Activated T-helper 2 cell treated with anti-CD3 and anti-CD28 coated beads, Interferon-gamma antibody, Interleukin-2, Interleukin-4, amounts not matched to agents 10 μg/mL and 5 μg/mL and 100 μg/mL, durations not matched to agents 14 hours and 24 hours and 36 hours (primary cell): ENCODE measurements at regions of chrX and their contacts with region 1.

Region 1: DNA sequence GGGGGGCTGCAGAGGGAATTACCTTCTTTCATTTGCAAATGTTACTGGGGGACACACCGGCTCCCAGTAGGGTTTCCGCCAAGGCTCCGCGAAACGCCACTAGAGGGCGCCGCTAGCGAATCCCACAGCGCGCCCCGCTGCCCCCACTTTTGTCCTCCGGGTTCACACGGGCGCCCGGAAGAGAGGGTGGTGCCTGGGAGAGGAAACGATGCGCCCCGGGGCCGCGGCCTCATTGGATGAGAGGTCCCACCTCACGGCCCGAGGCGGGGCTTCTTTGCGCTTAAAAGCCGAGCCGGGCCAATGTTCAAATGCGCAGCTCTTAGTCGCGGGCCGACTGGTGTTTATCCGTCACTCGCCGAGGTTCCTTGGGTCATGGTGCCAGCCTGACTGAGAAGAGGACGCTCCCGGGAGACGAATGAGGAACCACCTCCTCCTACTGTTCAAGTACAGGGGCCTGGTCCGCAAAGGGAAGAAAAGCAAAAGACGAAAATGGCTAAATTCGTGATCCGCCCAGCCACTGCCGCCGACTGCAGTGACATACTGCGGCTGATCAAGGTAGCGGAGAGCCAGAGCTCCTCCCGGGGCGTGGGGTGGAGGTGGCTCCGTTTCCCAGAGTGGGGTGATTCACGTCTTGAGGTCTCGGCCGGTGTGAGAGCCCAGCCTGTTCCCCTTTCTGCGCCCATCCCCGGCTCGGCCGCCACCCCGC is at the start of gene SAT1:
- DNase-seq: peak; percentile 90
- H3K4me3 Mint-ChIP-seq: peak within 1 kb of the TSS; percentile 90
- H3K27ac Mint-ChIP-seq: peak within 1 kb of the TSS; percentile 96
- H3K4me1 Mint-ChIP-seq: peaks cover 31% of the 10 kb centered on the region
- H3K27me3 Mint-ChIP-seq: no peaks in the 10 kb centered on the region
- total RNA-seq, gene SAT1: 76.7 and 78.8 TPM in 2 replicates

Region 2: DNA sequence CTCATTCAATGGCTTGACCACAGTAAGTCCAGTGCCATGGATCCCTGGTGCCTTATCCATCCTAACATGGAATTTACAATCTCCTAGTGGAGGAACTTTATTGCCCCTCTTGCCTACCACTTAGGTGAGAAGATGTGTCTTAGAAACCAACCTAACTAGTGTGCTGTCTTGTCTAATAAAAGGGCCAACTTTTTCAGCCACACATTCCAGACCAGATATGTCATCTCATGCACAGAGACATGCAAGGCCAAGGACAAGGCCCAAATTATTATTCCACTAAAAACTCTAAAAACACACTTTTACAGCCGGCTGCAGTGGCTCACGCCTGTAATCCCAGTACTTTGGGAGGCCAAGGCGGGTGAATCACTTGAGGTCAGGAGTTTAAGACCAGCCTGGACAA is 126.3 kb before region 1 on chrX:
- intact Hi-C with region 1: no loop called
- DNase-seq: no peak
- H3K4me3 Mint-ChIP-seq: no peak overlapping the region
- H3K27ac Mint-ChIP-seq: no peak overlapping the region
- H3K4me1 Mint-ChIP-seq: peaks cover 7% of the 10 kb centered on the region
- H3K27me3 Mint-ChIP-seq: peaks cover 2% of the 10 kb centered on the region

Region 3: DNA sequence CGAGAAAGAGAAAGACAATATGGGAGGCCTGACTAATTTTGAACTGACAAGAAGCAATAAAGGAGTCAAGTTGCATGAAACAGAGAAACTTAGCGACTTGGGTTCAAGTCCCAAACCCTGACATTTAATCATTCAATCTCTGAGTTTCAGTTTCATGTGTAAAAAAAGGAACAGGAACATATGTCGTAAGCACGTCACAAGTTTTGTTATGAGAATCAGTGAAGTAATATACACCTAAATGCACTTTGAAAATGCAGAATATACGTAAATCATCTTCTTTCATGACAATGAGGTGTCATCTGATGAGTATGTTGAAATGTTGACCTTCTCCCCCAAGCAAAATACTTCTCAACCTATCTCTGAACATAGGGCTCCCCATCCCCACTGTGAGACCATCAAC is 50.3 kb before region 1 on chrX:
- intact Hi-C with region 1: loop called (anchors 1 kb)
- DNase-seq: no peak
- H3K4me3 Mint-ChIP-seq: peak overlapping the region; percentile 57
- H3K27ac Mint-ChIP-seq: peak overlapping the region; percentile 79
- H3K4me1 Mint-ChIP-seq: peaks cover 27% of the 10 kb centered on the region
- H3K27me3 Mint-ChIP-seq: no peaks in the 10 kb centered on the region

Region 4: GRCh38 chrX:23742697-23743622 is 40.1 kb before region 1 on chrX and contains the start of gene ACOT9:
- intact Hi-C with region 1: loop called (anchors 2 kb)
- DNase-seq: peak; percentile 75
- H3K4me3 Mint-ChIP-seq: peak within 1 kb of the TSS; percentile 94
- H3K27ac Mint-ChIP-seq: peak within 1 kb of the TSS; percentile 90
- H3K4me1 Mint-ChIP-seq: peaks cover 19% of the 10 kb centered on the region
- H3K27me3 Mint-ChIP-seq: no peaks in the 10 kb centered on the region
- total RNA-seq, gene ACOT9: 75.2 and 76.0 TPM in 2 replicates

Region 5: GRCh38 chrX:23756157-23756559 is 26.9 kb before region 1 on chrX:
- intact Hi-C with region 1: loop called (anchors 1 kb)
- DNase-seq: peak; percentile 55
- H3K4me3 Mint-ChIP-seq: no peak overlapping the region
- H3K27ac Mint-ChIP-seq: no peak overlapping the region
- H3K4me1 Mint-ChIP-seq: peaks cover 5% of the 10 kb centered on the region
- H3K27me3 Mint-ChIP-seq: no peaks in the 10 kb centered on the region

Region 6: GRCh38 chrX:23766650-23767551 is 16.1 kb before region 1 on chrX:
- intact Hi-C with region 1: no loop called
- DNase-seq: no peak
- H3K4me3 Mint-ChIP-seq: no peak overlapping the region
- H3K27ac Mint-ChIP-seq: no peak overlapping the region
- H3K4me1 Mint-ChIP-seq: no peaks in the 10 kb centered on the region
- H3K27me3 Mint-ChIP-seq: no peaks in the 10 kb centered on the region

Region 7: DNA sequence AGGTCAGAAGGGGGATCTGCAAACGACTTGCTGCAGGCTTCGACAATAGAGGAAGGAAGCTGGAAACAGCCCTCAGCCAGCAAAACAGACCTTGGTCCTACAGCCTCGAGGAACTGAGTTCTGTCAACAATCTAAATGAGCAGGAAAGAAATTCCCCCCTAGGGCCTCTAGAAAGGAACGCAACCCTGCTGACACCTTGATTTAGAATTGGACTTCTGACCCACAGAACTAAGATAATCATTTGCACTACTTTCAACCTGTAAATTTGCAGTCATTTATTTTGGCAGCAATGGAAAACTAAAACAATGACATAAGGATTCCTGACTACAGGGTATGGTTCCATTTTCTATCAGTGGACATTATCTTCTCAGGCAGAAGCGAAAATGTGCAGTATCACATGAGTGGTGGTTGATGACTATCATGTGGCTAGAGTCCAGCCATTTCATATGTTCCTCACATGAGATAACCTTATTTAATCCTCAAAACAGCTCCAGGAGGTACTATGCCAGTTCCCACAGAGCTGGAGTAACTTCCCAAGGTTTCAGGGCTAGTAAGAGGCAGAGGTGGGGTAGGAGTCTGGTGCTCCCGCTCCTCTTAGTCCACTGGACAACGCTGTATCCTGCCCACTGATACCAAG is 61.6 kb after region 1 on chrX:
- intact Hi-C with region 1: no loop called
- DNase-seq: no peak
- H3K4me3 Mint-ChIP-seq: no peak overlapping the region
- H3K27ac Mint-ChIP-seq: no peak overlapping the region
- H3K4me1 Mint-ChIP-seq: no peaks in the 10 kb centered on the region
- H3K27me3 Mint-ChIP-seq: no peaks in the 10 kb centered on the region

Region 8: DNA sequence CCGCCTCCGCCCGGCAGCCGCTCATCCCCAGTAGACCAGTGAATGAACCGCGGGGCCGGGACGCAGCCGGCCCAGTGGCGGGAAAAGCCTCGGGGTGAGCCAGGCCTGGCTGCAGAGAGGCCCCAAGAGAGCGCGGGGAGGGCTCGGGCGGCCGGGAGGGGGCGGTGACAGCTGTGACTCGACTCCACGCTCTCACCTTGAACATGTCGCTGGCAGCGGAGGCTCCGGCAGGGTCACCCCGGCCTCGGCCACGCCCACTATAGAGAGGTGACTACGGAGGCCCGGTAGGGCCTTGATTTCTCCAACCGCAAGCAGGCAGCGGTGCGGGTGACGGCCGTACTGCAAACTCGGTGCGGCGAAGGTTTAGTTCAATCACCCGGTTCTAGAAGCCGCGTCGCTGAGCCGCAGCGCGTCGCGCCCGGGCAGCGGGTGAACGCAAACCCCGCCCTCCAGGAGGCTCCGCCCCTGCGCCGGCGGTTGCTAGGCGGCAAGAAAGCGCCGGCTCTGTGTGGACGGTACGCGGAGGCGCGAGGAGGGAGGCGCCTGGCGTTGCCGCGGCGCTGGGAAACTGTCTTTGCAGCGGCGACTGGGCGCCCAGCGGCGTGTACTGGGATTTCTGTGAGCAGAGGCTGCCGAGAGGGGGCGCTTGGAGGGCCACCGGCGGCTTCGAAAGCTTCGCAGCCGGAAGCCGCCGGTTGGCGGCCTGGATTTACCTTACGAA is 124.6 kb after region 1 on chrX and contains the starts of genes APOO and CXorf58:
- intact Hi-C with region 1: loop called (anchors 1 kb)
- DNase-seq: peak; percentile 90
- H3K4me3 Mint-ChIP-seq: peak within 1 kb of the TSS; percentile 77
- H3K27ac Mint-ChIP-seq: peak within 1 kb of the TSS; percentile 85
- H3K4me1 Mint-ChIP-seq: peaks cover 22% of the 10 kb centered on the region
- H3K27me3 Mint-ChIP-seq: no peaks in the 10 kb centered on the region
- total RNA-seq, gene APOO: 21.9 and 22.4 TPM in 2 replicates
- total RNA-seq, gene CXorf58: 0.21 TPM in 1 of 2 replicates, not detected in the other

Region 9: DNA sequence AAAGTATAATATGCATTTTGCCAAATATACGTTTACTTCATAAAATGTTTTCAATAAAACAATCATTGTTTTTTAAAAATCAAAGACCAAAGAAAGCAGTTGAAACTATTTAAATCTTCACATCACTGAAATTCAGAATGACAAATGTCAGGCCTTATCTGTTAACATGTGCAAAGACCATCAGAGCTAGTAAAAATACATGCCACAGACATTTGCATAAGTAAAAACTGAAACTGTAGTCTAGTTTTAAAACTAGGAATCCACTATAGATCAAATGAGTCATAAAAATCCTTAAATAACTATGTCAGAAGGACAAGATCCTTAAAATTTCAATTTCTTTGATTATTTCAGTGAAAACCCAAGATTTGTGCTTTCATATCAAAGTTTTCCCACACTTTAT is 219.2 kb after region 1 on chrX:
- intact Hi-C with region 1: no loop called
- DNase-seq: no peak
- H3K4me3 Mint-ChIP-seq: no peak overlapping the region
- H3K27ac Mint-ChIP-seq: no peak overlapping the region
- H3K4me1 Mint-ChIP-seq: peaks cover 21% of the 10 kb centered on the region
- H3K27me3 Mint-ChIP-seq: no peaks in the 10 kb centered on the region